ENCODE measurements at regions of chr20 and their contacts with region 1.

Region 1: DNA sequence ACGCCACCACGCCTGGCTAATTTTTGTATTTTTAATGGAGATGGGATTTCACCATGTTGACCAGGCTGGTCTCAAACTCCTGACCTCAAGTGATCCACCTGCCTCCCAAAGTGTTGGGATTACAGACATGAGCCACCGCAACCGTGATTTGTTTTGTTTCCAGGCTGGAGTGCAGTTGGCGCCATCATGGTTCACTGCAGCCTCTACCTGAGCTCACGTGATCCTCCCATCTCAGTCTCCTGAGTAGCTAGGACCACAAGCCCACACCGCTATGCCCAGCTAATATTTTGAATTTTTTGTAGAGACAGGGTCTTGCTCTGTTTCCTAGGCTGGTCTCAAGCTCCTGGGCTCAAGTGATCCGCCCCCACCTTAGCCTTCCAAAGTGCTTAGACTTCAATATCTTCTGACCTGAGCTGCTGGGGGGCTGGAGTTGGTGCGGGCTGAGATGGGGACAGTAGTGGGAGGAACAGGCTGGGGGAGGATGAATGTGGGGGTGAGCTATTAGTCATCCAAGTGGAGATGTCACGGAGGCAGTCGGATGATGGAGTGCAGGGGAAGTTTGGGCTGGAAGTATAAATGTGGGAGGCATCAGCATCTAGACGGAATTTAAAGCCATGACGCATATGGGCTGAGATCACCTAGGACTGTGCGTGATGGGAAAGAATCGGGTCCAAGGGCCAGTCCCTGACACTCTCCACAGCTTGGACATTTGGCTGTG is 23.1 kb upstream of the ZMYND8 start:
- DNase-seq: no peak
- H3K4me3 ChIP-seq: no peak overlapping the region
- H3K4me3 Mint-ChIP-seq: no peak overlapping the region
- H3K27ac Mint-ChIP-seq: peak overlapping the region; percentile 2
- H3K4me1 ChIP-seq: peaks cover 15% of the 10 kb centered on the region
- H3K4me1 Mint-ChIP-seq: peaks cover 18% of the 10 kb centered on the region
- H3K27me3 ChIP-seq: no peaks in the 10 kb centered on the region
- H3K27me3 Mint-ChIP-seq: no peaks in the 10 kb centered on the region
- CTCF ChIP-seq: no peak

Region 2: GRCh38 chr20:47181056-47181862 is 198.3 kb before region 1 on chr20:
- CTCF ChIA-PET with region 1: interaction called, 13 read pairs
- POLR2A ChIA-PET with region 1: no interaction called
- intact Hi-C with region 1: no loop called
- DNase-seq: peak; percentile 83 to 89
- H3K4me3 ChIP-seq: no peak overlapping the region
- H3K4me3 Mint-ChIP-seq: no peak overlapping the region
- H3K27ac Mint-ChIP-seq: no peak overlapping the region
- H3K4me1 ChIP-seq: no peaks in the 10 kb centered on the region
- H3K4me1 Mint-ChIP-seq: no peaks in the 10 kb centered on the region
- H3K27me3 ChIP-seq: no peaks in the 10 kb centered on the region
- H3K27me3 Mint-ChIP-seq: no peaks in the 10 kb centered on the region
- CTCF ChIP-seq: no peak

Region 3: GRCh38 chr20:47230811-47231256 is 148.8 kb before region 1 on chr20:
- CTCF ChIA-PET with region 1: interaction called, 11 read pairs
- POLR2A ChIA-PET with region 1: no interaction called
- intact Hi-C with region 1: no loop called
- DNase-seq: no peak
- H3K4me3 ChIP-seq: no peak overlapping the region
- H3K4me3 Mint-ChIP-seq: no peak overlapping the region
- H3K27ac Mint-ChIP-seq: peak overlapping the region; percentile 2
- H3K4me1 ChIP-seq: 0 out of 2 replicates have a peak, but pooled peaks cover 4% of the 10 kb centered on the region
- H3K4me1 Mint-ChIP-seq: peaks cover 6% of the 10 kb centered on the region
- H3K27me3 ChIP-seq: no peaks in the 10 kb centered on the region
- H3K27me3 Mint-ChIP-seq: no peaks in the 10 kb centered on the region
- CTCF ChIP-seq: no peak

Region 4: DNA sequence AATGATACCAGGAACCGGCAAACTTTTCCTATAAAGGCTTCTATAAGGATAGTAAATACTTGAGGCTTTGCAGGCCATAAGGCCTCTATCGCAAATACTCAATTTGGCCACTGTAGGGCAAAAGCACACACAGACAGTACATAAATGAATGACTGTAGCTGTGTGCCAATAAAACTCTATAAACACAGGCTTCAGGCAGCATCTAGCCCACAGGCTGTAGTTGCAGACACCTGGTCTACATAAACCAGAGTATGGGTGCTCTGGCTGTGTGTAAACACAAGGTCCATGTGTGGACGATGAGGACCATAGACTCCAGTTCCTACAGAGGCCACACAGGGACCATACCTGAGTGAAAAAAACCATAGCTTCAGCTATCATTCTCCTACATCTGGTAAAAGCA is 75.3 kb before region 1 on chr20:
- CTCF ChIA-PET with region 1: interaction called, 69 read pairs
- POLR2A ChIA-PET with region 1: interaction called, 3 read pairs
- intact Hi-C with region 1: loop called (anchors 1 kb)
- DNase-seq: peak; percentile 63 to 71
- H3K4me3 ChIP-seq: no peak overlapping the region
- H3K4me3 Mint-ChIP-seq: no peak overlapping the region
- H3K27ac Mint-ChIP-seq: peak overlapping the region; percentile 77
- H3K4me1 ChIP-seq: peaks cover 23% of the 10 kb centered on the region
- H3K4me1 Mint-ChIP-seq: peaks cover 31% of the 10 kb centered on the region
- H3K27me3 ChIP-seq: no peaks in the 10 kb centered on the region
- H3K27me3 Mint-ChIP-seq: no peaks in the 10 kb centered on the region
- CTCF ChIP-seq: peak; percentile 38 to 57

Region 5: GRCh38 chr20:47343007-47343472 is 36.6 kb before region 1 on chr20:
- CTCF ChIA-PET with region 1: interaction called, 14 read pairs
- POLR2A ChIA-PET with region 1: no interaction called
- intact Hi-C with region 1: loop called (anchors 5 kb)
- DNase-seq: no peak
- H3K4me3 ChIP-seq: no peak overlapping the region
- H3K4me3 Mint-ChIP-seq: no peak overlapping the region
- H3K27ac Mint-ChIP-seq: peak overlapping the region; percentile 8
- H3K4me1 ChIP-seq: peaks cover 44% of the 10 kb centered on the region
- H3K4me1 Mint-ChIP-seq: peaks cover 54% of the 10 kb centered on the region
- H3K27me3 ChIP-seq: no peaks in the 10 kb centered on the region
- H3K27me3 Mint-ChIP-seq: no peaks in the 10 kb centered on the region
- CTCF ChIP-seq: no peak

Region 6: DNA sequence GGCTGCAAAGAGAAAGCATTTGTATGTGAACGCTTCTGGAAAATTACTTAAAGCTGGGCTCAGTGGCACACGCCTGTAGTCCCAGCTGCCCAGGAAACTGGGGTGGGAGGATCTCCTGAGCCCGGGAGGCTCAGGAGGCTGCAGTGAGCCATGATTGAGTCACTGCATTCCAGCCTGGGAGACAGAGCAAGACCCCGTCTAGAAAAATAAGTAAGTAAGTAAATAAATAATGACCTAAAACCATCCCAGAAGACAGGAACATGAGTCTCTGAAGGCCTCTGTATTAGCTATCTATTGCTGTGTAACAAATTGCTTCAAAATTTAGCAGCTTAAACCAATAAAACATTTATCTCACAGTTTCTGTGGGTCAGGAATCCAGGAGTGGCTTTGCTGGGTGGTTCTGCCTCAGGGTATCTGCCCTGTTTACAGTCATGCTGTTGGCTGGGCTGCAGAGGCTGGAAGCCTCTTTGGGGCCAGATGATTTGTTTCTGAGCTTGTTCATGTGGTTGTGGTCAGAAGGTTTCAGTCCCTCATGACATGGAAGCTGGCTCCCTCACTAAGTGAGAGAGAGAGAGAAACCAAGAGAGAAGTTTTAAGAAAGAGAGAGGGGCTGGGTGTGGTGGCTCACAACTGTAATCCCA is 73.7 kb after region 1 on chr20:
- CTCF ChIA-PET with region 1: interaction called, 33 read pairs
- POLR2A ChIA-PET with region 1: no interaction called
- intact Hi-C with region 1: no loop called
- DNase-seq: peak; percentile 67 to 82
- H3K4me3 ChIP-seq: no peak overlapping the region
- H3K4me3 Mint-ChIP-seq: peak overlapping the region; percentile 64
- H3K27ac Mint-ChIP-seq: peak overlapping the region; percentile 94
- H3K4me1 ChIP-seq: peaks cover 49% of the 10 kb centered on the region
- H3K4me1 Mint-ChIP-seq: peaks cover 45% of the 10 kb centered on the region
- H3K27me3 ChIP-seq: no peaks in the 10 kb centered on the region
- H3K27me3 Mint-ChIP-seq: no peaks in the 10 kb centered on the region
- CTCF ChIP-seq: no peak

Region 7: GRCh38 chr20:47586646-47587306 is 207.2 kb after region 1 on chr20:
- CTCF ChIA-PET with region 1: no interaction called
- POLR2A ChIA-PET with region 1: no interaction called
- intact Hi-C with region 1: no loop called
- DNase-seq: no peak
- H3K4me3 ChIP-seq: no peak overlapping the region
- H3K4me3 Mint-ChIP-seq: no peak overlapping the region
- H3K27ac Mint-ChIP-seq: no peak overlapping the region
- H3K4me1 ChIP-seq: no peaks in the 10 kb centered on the region
- H3K4me1 Mint-ChIP-seq: no peaks in the 10 kb centered on the region
- H3K27me3 ChIP-seq: no peaks in the 10 kb centered on the region
- H3K27me3 Mint-ChIP-seq: no peaks in the 10 kb centered on the region
- CTCF ChIP-seq: no peak

Region 8: DNA sequence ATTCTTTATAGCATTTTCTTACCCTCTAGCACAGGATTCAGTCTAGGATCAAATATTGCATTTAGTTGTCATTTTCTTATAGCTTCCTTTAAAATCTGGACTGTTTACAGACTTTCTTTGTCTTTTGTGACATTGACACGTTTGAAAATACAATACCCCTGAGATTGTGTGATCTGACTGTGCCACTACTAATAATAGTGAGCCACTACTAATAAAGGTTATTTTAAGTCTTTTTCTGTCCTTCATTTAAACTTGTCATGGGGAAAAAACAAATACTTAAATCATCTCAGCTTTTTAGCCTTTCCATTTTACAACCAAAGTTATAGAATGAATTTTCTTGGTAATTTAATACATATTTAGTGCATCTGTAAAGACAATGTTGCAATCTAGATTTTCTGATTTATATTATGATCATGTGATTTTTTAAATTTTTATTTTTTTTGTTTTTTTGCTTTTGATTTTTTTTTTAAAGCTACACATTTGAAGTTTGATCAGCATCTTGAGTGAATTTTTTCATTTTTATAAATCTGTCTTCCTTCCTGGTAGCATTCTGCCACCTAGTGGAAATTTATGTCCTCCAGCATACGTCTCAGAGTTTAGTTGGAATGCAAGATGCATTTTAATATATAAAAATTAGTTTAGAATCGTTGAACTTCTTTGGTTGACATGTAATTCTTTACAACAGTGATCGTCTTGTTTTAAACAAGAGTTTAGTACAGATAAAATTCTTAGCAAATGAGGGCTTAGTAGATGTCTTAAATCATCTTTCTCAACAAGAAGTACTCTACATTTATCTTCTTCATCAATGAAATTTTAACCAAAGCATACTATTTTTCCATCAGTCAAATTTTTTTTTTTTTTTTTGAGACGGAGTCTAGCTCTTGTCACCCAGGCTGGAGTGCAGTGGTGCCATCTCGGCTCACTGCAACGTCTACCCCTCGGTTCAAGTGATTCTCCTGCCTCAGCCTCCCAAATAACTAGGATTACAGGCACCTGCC is 241.5 kb after region 1 on chr20:
- CTCF ChIA-PET with region 1: interaction called, 31 read pairs
- POLR2A ChIA-PET with region 1: no interaction called
- intact Hi-C with region 1: loop called (anchors 1 kb)
- DNase-seq: peak in 1 of 2 experiments; percentile 69
- H3K4me3 ChIP-seq: no peak overlapping the region
- H3K4me3 Mint-ChIP-seq: no peak overlapping the region
- H3K27ac Mint-ChIP-seq: peak overlapping the region; percentile 4
- H3K4me1 ChIP-seq: 0 out of 2 replicates have a peak, but pooled peaks cover 6% of the 10 kb centered on the region
- H3K4me1 Mint-ChIP-seq: peaks cover 16% of the 10 kb centered on the region
- H3K27me3 ChIP-seq: no peaks in the 10 kb centered on the region
- H3K27me3 Mint-ChIP-seq: no peaks in the 10 kb centered on the region
- CTCF ChIP-seq: peak; percentile 95 to 97

Region 9: GRCh38 chr20:47677635-47678453 is 298.3 kb after region 1 on chr20:
- CTCF ChIA-PET with region 1: no interaction called
- POLR2A ChIA-PET with region 1: no interaction called
- intact Hi-C with region 1: no loop called
- DNase-seq: peak; percentile 87 to 93
- H3K4me3 ChIP-seq: no peak overlapping the region
- H3K4me3 Mint-ChIP-seq: no peak overlapping the region
- H3K27ac Mint-ChIP-seq: peak overlapping the region; percentile 31
- H3K4me1 ChIP-seq: peaks cover 27% of the 10 kb centered on the region
- H3K4me1 Mint-ChIP-seq: no peaks in the 10 kb centered on the region
- H3K27me3 ChIP-seq: no peaks in the 10 kb centered on the region
- H3K27me3 Mint-ChIP-seq: no peaks in the 10 kb centered on the region
- CTCF ChIP-seq: peak; percentile 99 to 100

Measured in Caco-2 (cell line).